ENCODE measurements at regions of chr18 and their contacts with region 1.

Region 1: DNA sequence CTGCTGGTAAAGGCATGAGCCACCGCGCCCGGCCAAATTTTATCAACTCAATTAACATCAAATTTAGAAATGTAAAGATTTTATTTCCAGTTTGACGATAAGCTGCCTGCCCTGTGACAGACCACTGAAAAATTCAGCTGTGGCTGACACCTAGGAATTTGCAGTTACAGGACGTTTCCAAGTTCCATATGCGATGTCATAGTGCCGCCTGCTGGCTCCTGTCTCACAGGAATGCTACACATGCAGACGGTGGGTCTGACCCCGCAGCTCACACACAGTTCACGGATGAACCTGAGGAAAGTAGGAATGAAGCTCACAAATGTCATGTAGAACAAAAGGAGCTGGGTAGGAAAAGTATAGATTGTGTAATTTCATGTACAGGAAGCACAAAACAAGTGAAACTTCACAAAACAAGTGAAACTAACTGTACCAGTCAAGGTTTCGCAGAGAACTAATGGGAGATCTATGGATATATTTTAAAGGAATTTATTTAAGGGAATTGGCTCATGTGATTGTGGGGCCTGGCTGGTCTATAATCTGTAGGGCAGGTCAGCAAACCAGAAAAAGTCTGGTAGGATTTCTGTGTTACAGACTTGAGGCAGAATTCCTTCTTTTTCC is 13.2 kb upstream of the SEH1L start:
- DNase-seq: peak; percentile 84
- H3K4me3 ChIP-seq: no peak overlapping the region
- H3K27ac ChIP-seq: no peak overlapping the region
- H3K4me1 ChIP-seq: peaks cover 0 to 5% (median 2%) of the 10 kb centered on the region in 4 donors
- H3K27me3 ChIP-seq: no peaks in the 10 kb centered on the region
- CTCF ChIP-seq: peak; percentile 73 to 88 (median 82)
- EP300 ChIP-seq: no peak
- POLR2A ChIP-seq: no peak

Region 2: DNA sequence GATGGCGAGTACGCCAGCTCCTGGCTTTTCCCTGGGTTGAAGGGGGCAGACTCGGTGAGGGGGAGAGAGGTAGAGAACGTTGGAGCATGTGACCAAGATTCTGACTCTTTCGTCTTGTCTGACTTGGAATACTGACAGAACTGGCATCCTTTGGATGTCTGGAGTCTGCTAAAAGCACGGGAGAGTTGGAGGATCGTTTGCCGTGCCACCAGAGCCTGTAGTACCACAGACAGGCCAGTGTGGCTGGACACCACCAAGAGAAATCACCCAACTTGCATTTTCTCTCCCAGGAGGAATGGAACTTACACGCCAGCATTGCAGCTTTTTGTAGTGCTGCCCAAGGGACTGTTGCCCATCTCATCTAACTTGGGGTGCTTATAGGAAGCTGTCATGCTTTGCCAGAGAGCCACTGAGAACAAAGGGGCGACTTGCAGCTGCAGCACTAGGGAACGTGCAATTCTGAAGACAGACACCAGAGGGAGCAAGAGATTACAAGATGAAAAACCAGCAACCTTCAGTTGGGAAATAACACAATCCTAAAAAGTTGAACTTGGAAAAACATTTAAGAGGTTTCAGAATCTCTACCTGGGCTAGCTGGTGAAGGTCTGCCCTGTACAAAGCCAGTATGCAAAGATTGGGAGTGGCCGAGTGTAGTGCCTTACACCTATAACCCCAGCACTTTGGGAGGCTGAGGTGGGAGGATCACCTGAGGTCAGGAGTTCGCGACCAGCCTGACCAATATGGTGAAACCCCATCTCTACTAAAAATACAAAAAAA is 207.6 kb before region 1 on chr18:
- intact Hi-C with region 1: loop called (anchors 1 kb)
- DNase-seq: no peak
- H3K4me3 ChIP-seq: no peak overlapping the region
- H3K27ac ChIP-seq: no peak overlapping the region
- H3K4me1 ChIP-seq: no peaks in the 10 kb centered on the region
- H3K27me3 ChIP-seq: no peaks in the 10 kb centered on the region
- CTCF ChIP-seq: peak; percentile 70 to 87 (median 82)
- EP300 ChIP-seq: no peak
- POLR2A ChIP-seq: no peak

Region 3: GRCh38 chr18:12744103-12744502 is 190.5 kb before region 1 on chr18:
- intact Hi-C with region 1: loop called (anchors 5 kb)
- DNase-seq: no peak
- H3K4me3 ChIP-seq: no peak overlapping the region
- H3K27ac ChIP-seq: no peak overlapping the region
- H3K4me1 ChIP-seq: no peaks in the 10 kb centered on the region
- H3K27me3 ChIP-seq: no peaks in the 10 kb centered on the region
- CTCF ChIP-seq: peak; percentile 16 to 41 (median 36)
- EP300 ChIP-seq: no peak
- POLR2A ChIP-seq: no peak

Measured in sigmoid colon (tissue), 7 donors.